Naive thymus-derived CD4-positive, alpha-beta T cell (primary cell): ENCODE measurements at regions of chr11 and their contacts with region 1.

Region 1: GRCh38 chr11:130213143-130213978 is 53.8 kb downstream of the ST14 start:
- DNase-seq: peak; percentile 39 to 83 (median 67)
- ATAC-seq: peak; percentile 92
- H3K4me3 ChIP-seq: no peak overlapping the region
- H3K4me3 Mint-ChIP-seq: no peak overlapping the region
- H3K27ac ChIP-seq: no peak overlapping the region
- H3K27ac Mint-ChIP-seq: no peak overlapping the region
- H3K4me1 ChIP-seq: no peaks in the 10 kb centered on the region
- H3K4me1 Mint-ChIP-seq: peaks cover 0 to 2% (median 0%) of the 10 kb centered on the region in 7 donors
- H3K27me3 ChIP-seq: no peaks in the 10 kb centered on the region
- H3K27me3 Mint-ChIP-seq: peaks cover 0 to 11% (median 0%) of the 10 kb centered on the region in 5 donors

Region 2: GRCh38 chr11:129484068-129484467 is 729.3 kb before region 1 on chr11:
- CTCF ChIA-PET with region 1: no interaction called
- POLR2A ChIA-PET with region 1: no interaction called
- intact Hi-C with region 1: no loop called
- DNase-seq: no peak
- ATAC-seq: no peak
- H3K4me3 ChIP-seq: no peak overlapping the region
- H3K4me3 Mint-ChIP-seq: no peak overlapping the region
- H3K27ac ChIP-seq: no peak overlapping the region
- H3K27ac Mint-ChIP-seq: no peak overlapping the region
- H3K4me1 ChIP-seq: no peaks in the 10 kb centered on the region
- H3K4me1 Mint-ChIP-seq: no peaks in the 10 kb centered on the region
- H3K27me3 ChIP-seq: no peaks in the 10 kb centered on the region
- H3K27me3 Mint-ChIP-seq: peaks cover 2 to 27% (median 18%) of the 10 kb centered on the region in 5 donors

Region 3: DNA sequence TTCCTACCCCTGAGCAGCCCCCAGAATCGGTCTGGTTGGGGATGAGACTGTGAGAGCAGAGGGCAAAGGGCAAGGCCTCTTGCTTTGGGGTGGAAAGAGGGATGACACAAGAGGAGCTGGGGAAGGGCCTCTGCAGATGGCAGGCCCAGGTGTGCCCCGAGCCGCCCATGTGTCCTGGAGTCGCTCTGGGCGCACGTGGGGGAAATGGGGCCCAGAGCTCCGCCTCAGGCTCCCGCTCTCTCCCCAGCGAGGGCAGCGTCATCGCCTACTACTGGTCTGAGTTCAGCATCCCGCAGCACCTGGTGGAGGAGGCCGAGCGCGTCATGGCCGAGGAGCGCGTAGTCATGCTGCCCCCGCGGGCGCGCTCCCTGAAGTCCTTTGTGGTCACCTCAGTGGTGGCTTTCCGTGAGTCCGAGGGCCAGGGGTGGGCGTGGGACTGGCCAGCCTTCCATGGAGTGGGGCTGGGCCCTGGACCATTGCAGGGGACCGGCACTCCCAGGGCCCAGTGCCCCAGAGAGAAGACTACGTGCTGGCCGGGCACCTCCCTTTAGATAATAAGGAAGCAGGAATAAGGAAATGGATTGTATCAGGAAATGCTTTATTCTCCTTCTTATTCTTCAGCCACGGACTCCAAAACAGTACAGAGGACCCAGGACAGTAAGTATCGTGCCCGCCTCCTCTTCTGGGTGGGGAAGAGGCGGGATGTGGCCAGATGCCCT is 23.7 kb before region 1 on chr11:
- CTCF ChIA-PET with region 1: no interaction called
- POLR2A ChIA-PET with region 1: no interaction called
- intact Hi-C with region 1: no loop called
- DNase-seq: no peak
- ATAC-seq: no peak
- H3K4me3 ChIP-seq: no peak overlapping the region
- H3K4me3 Mint-ChIP-seq: no peak overlapping the region
- H3K27ac ChIP-seq: no peak overlapping the region
- H3K27ac Mint-ChIP-seq: no peak overlapping the region
- H3K4me1 ChIP-seq: no peaks in the 10 kb centered on the region
- H3K4me1 Mint-ChIP-seq: no peaks in the 10 kb centered on the region
- H3K27me3 ChIP-seq: no peaks in the 10 kb centered on the region
- H3K27me3 Mint-ChIP-seq: peaks cover 0 to under 1% (median 0%) of the 10 kb centered on the region in 5 donors

Region 4: GRCh38 chr11:130370845-130371590 is 157.7 kb after region 1 on chr11:
- CTCF ChIA-PET with region 1: interaction called, 7 read pairs
- POLR2A ChIA-PET with region 1: no interaction called
- intact Hi-C with region 1: loop called in 1 of 2 experiments (anchors 1 kb)
- DNase-seq: no peak
- ATAC-seq: no peak
- H3K4me3 ChIP-seq: no peak overlapping the region
- H3K4me3 Mint-ChIP-seq: no peak overlapping the region
- H3K27ac ChIP-seq: no peak overlapping the region
- H3K27ac Mint-ChIP-seq: no peak overlapping the region
- H3K4me1 ChIP-seq: no peaks in the 10 kb centered on the region
- H3K4me1 Mint-ChIP-seq: no peaks in the 10 kb centered on the region
- H3K27me3 ChIP-seq: peaks cover 0 to 4% of the 10 kb centered on the region in 2 donors
- H3K27me3 Mint-ChIP-seq: peaks cover 0 to 3% (median 2%) of the 10 kb centered on the region in 5 donors

Region 5: GRCh38 chr11:130861902-130862860 is 648.8 kb after region 1 on chr11:
- CTCF ChIA-PET with region 1: interaction called, 15 read pairs
- POLR2A ChIA-PET with region 1: no interaction called
- intact Hi-C with region 1: loop called (anchors 1 kb)
- DNase-seq: peak; percentile 71 to 87 (median 82)
- ATAC-seq: peak; percentile 95
- H3K4me3 ChIP-seq: no peak overlapping the region
- H3K4me3 Mint-ChIP-seq: peak overlapping the region in 1 of 10 donors; percentile 10
- H3K27ac ChIP-seq: no peak overlapping the region
- H3K27ac Mint-ChIP-seq: peak overlapping the region in 3 of 9 donors; percentile 26 to 72 (median 32)
- H3K4me1 ChIP-seq: no peaks in the 10 kb centered on the region
- H3K4me1 Mint-ChIP-seq: peaks cover 0 to 7% (median 6%) of the 10 kb centered on the region in 7 donors
- H3K27me3 ChIP-seq: no peaks in the 10 kb centered on the region
- H3K27me3 Mint-ChIP-seq: peaks cover 0 to 5% (median 1%) of the 10 kb centered on the region in 5 donors

Region 6: DNA sequence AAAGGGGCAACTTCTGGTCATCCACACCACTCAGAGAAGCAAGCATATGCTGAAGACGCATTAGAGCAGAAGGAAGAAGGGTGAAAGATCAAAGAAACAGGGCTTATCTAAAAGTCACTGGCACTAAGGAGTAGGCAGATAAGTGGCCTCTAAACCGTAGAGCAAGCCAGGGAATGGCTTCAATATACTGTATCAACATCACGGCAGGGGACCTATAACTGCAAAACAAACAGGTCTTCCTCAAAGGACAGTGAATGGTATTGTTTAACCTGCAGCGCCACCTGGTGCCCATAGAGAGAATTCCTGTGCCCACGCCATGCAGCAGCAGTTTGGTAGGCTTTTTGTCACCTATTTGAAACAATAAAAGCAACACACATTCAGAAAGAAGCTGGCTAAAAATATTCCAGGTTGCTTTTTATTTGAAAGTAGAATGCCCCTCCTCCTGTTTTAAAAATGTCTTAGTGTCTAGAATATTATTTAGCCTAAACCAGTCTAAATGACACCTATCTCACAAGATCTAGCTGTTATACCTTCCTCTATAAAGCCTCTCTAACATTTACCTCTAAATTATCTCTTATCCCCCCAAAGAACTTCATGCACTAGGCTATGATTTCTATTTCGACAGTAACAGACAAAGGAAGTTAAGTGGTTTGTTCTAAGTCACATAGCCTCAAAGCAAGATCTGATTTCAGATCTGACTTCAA is 681.1 kb after region 1 on chr11:
- CTCF ChIA-PET with region 1: no interaction called
- POLR2A ChIA-PET with region 1: no interaction called
- intact Hi-C with region 1: loop called in 1 of 2 experiments (anchors 10 kb)
- DNase-seq: peak; percentile 33 to 64 (median 49)
- ATAC-seq: peak; percentile 94
- H3K4me3 ChIP-seq: no peak overlapping the region
- H3K4me3 Mint-ChIP-seq: no peak overlapping the region
- H3K27ac ChIP-seq: no peak overlapping the region
- H3K27ac Mint-ChIP-seq: peak overlapping the region in 2 of 9 donors; percentile 22 to 38
- H3K4me1 ChIP-seq: no peaks in the 10 kb centered on the region
- H3K4me1 Mint-ChIP-seq: peaks cover 0 to 9% (median 9%) of the 10 kb centered on the region in 7 donors
- H3K27me3 ChIP-seq: no peaks in the 10 kb centered on the region
- H3K27me3 Mint-ChIP-seq: no peaks in the 10 kb centered on the region